ENCODE measurements at regions of chr2 and their contacts with region 1.

Region 1: GRCh38 chr2:41782306-41783158 is 265.3 kb upstream of the PKDCC start:
- DNase-seq: peak in 4 of 5 donors; percentile 25 to 40 (median 32)
- H3K4me3 ChIP-seq: no peak overlapping the region
- H3K4me3 Mint-ChIP-seq: peak overlapping the region in 1 of 8 donors; percentile 5
- H3K27ac ChIP-seq: no peak overlapping the region
- H3K27ac Mint-ChIP-seq: no peak overlapping the region
- H3K4me1 ChIP-seq: no peaks in the 10 kb centered on the region
- H3K4me1 Mint-ChIP-seq: no peaks in the 10 kb centered on the region
- H3K27me3 ChIP-seq: no peaks in the 10 kb centered on the region
- H3K27me3 Mint-ChIP-seq: peaks cover 7 to 8% of the 10 kb centered on the region in 2 donors

Region 2: DNA sequence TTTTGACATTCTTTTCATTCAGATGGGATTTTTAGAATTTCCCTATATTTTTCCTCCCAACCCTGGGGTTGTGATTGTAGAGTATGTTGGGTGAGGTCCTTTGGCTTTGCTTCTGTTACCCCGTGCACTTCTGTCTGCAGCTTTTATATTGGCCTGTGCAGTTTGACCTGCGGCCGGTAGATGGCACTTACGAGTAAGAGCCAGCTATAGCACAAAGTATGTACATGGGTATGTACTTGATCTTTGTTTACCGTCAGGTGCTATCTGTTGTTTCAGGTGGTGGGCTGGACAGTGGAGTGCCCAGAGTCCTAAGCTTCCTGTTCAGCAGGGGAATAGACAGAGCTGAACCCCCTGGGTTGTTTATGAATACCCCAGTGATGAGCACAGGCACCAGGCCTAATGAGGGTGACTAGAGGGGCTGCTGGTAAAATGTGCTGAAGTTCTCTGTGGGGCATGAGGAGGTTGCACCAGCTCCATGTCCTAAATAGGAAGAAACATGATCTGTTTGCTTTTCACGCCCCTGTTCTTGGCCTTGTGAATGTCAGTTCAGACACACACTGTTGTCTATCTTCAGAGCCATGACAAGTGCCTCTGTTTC is 1944.6 kb before region 1 on chr2:
- CTCF ChIA-PET with region 1: no interaction called
- POLR2A ChIA-PET with region 1: no interaction called
- intact Hi-C with region 1: loop called (anchors 5 kb)
- DNase-seq: no peak
- H3K4me3 ChIP-seq: no peak overlapping the region
- H3K4me3 Mint-ChIP-seq: no peak overlapping the region
- H3K27ac ChIP-seq: no peak overlapping the region
- H3K27ac Mint-ChIP-seq: no peak overlapping the region
- H3K4me1 ChIP-seq: no peaks in the 10 kb centered on the region
- H3K4me1 Mint-ChIP-seq: no peaks in the 10 kb centered on the region
- H3K27me3 ChIP-seq: no peaks in the 10 kb centered on the region
- H3K27me3 Mint-ChIP-seq: peaks cover 5 to 19% of the 10 kb centered on the region in 2 donors

Region 3: GRCh38 chr2:40244675-40245074 is 1537.9 kb before region 1 on chr2:
- CTCF ChIA-PET with region 1: no interaction called
- POLR2A ChIA-PET with region 1: no interaction called
- intact Hi-C with region 1: loop called (anchors 5 kb)
- DNase-seq: no peak
- H3K4me3 ChIP-seq: no peak overlapping the region
- H3K4me3 Mint-ChIP-seq: no peak overlapping the region
- H3K27ac ChIP-seq: no peak overlapping the region
- H3K27ac Mint-ChIP-seq: no peak overlapping the region
- H3K4me1 ChIP-seq: no peaks in the 10 kb centered on the region
- H3K4me1 Mint-ChIP-seq: no peaks in the 10 kb centered on the region
- H3K27me3 ChIP-seq: no peaks in the 10 kb centered on the region
- H3K27me3 Mint-ChIP-seq: no peaks in the 10 kb centered on the region

Region 4: DNA sequence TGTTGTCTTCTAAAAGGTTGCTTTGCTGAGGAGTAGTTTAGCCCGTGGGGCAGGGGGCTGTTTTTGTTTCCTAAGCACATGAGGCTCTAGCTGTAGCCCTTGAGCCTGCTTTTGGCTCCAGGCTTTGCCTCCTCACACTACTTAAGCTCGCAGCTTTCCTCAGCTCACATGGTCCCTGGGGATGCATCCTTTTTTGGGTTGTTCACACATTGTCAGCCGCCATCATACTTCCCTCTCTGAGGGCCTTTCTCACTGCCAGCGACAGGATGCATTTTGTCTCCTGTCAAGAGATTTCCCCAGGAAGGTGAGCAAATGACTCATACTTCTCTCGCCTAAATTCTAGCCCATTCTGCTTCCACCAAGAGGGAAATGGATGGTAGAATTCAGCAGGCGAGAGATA is 14.2 kb before region 1 on chr2:
- CTCF ChIA-PET with region 1: interaction called, 11 read pairs
- POLR2A ChIA-PET with region 1: no interaction called
- intact Hi-C with region 1: no loop called
- DNase-seq: no peak
- H3K4me3 ChIP-seq: no peak overlapping the region
- H3K4me3 Mint-ChIP-seq: no peak overlapping the region
- H3K27ac ChIP-seq: no peak overlapping the region
- H3K27ac Mint-ChIP-seq: no peak overlapping the region
- H3K4me1 ChIP-seq: no peaks in the 10 kb centered on the region
- H3K4me1 Mint-ChIP-seq: no peaks in the 10 kb centered on the region
- H3K27me3 ChIP-seq: no peaks in the 10 kb centered on the region
- H3K27me3 Mint-ChIP-seq: peaks cover 10 to 15% of the 10 kb centered on the region in 2 donors